ENCODE measurements at regions of chr7 and their contacts with region 1.

Region 1: DNA sequence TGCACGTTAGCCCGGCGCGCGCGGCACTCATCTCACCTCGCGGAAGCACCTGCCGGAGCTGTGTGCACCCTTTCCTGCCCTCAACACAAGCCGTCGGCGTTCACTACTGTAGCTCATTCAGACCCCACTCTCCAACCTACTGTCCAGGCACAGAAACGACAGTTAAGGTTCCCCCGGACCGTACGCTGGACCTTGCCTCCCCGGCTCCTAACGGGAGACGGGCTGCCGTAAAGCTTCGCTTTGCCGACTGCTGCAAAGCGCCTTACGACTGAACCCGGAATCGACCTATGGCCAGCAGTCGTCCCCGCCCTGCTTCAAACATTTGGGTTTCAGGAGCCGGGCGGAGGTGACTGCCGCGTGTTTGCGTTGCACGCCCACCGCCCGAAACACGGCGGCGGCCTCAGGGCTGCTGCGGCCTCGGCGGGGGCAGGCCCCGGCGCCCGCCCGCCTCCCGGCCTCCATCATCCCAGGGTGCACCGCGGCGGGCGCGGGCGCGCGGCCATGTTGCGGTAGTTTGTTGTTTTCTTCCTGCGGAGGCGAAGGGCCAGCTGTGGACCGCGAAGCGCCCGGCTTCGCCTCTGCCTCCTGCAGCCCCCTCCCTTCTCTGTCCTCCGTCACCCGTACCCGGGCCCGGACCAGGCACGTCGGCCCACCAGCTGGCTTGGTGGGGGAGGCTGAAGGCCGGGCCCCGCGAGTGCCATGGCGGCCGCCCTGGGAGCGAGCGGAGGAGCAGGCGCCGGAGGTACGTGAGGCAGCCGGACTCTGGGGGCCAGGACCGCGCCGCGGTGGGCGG is at the start of gene RBM33:
- DNase-seq: peak; percentile 53 to 87 (median 69)
- ATAC-seq: peak; percentile 81
- H3K4me3 ChIP-seq: peak within 1 kb of the TSS; percentile 79
- H3K4me3 Mint-ChIP-seq: peak within 1 kb of the TSS; percentile 99
- H3K27ac ChIP-seq: peak within 1 kb of the TSS; percentile 83 to 94
- H3K27ac Mint-ChIP-seq: peak within 1 kb of the TSS; percentile 94
- H3K4me1 ChIP-seq: peaks cover 22% of the 10 kb centered on the region
- H3K4me1 Mint-ChIP-seq: peaks cover 62% of the 10 kb centered on the region
- H3K27me3 ChIP-seq: no peaks in the 10 kb centered on the region
- H3K27me3 Mint-ChIP-seq: no peaks in the 10 kb centered on the region
- CTCF ChIP-seq: no peak
- total RNA-seq, gene RBM33: 178 to 184 TPM

Region 2: DNA sequence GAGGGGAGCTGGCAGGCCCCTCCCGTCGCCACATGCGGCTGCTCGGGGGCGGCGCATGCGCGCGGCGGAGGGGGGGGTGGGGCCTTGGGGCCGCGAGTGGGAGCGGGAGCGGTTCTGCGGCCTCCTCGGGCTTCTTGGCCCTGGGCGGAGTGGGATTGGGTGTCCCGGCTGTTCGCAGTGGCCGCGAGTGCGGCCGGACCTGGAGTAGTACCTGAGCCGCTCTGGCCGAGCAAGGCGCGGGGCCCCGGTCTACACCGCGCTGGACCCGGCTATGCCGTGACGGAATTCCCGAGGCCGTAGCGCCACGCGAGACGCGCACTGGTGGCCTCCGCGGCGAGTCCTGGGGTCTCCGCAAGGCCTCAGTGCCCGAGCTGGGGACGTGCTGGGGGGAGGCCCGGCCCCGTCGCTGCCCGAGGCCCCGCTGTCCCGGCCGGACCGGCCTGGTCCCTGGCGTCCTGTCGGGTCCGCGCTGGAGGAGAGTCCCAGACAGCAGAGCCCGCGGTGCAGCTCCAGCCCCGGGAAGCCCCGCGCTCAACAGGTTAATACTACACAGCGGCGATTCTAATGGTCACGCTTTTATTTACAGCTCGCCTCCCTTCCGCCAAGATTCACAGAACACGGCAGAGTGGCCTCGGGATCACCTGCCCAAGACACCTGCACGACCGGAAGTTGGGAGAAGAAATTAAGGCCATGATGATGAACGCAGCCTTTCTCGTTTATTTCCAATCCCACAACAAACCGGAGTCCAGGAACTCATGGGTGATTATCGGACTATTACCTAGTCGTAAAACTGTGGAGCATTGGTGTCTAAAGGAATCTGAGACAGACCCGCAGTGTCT is 640.8 kb before region 1 on chr7:
- CTCF ChIA-PET with region 1: no interaction called
- POLR2A ChIA-PET with region 1: interaction called, 3 read pairs
- intact Hi-C with region 1: loop called in 1 of 2 experiments (anchors 5 kb)
- DNase-seq: peak; percentile 71 to 92 (median 85)
- ATAC-seq: peak; percentile 86
- H3K4me3 ChIP-seq: peak overlapping the region; percentile 85
- H3K4me3 Mint-ChIP-seq: peak overlapping the region; percentile 97
- H3K27ac ChIP-seq: peak overlapping the region; percentile 40 to 52
- H3K27ac Mint-ChIP-seq: peak overlapping the region; percentile 88
- H3K4me1 ChIP-seq: peaks cover 16% of the 10 kb centered on the region
- H3K4me1 Mint-ChIP-seq: peaks cover 23% of the 10 kb centered on the region
- H3K27me3 ChIP-seq: no peaks in the 10 kb centered on the region
- H3K27me3 Mint-ChIP-seq: no peaks in the 10 kb centered on the region
- CTCF ChIP-seq: no peak

Region 3: GRCh38 chr7:155694851-155695250 is 50.5 kb after region 1 on chr7:
- CTCF ChIA-PET with region 1: no interaction called
- POLR2A ChIA-PET with region 1: no interaction called
- intact Hi-C with region 1: loop called in 1 of 2 experiments (anchors 10 kb)
- DNase-seq: no peak
- ATAC-seq: no peak
- H3K4me3 ChIP-seq: no peak overlapping the region
- H3K4me3 Mint-ChIP-seq: peak overlapping the region; percentile 13
- H3K27ac ChIP-seq: no peak overlapping the region
- H3K27ac Mint-ChIP-seq: no peak overlapping the region
- H3K4me1 ChIP-seq: peaks cover 10% of the 10 kb centered on the region
- H3K4me1 Mint-ChIP-seq: peaks cover 92% of the 10 kb centered on the region
- H3K27me3 ChIP-seq: no peaks in the 10 kb centered on the region
- H3K27me3 Mint-ChIP-seq: no peaks in the 10 kb centered on the region
- CTCF ChIP-seq: no peak

Region 4: DNA sequence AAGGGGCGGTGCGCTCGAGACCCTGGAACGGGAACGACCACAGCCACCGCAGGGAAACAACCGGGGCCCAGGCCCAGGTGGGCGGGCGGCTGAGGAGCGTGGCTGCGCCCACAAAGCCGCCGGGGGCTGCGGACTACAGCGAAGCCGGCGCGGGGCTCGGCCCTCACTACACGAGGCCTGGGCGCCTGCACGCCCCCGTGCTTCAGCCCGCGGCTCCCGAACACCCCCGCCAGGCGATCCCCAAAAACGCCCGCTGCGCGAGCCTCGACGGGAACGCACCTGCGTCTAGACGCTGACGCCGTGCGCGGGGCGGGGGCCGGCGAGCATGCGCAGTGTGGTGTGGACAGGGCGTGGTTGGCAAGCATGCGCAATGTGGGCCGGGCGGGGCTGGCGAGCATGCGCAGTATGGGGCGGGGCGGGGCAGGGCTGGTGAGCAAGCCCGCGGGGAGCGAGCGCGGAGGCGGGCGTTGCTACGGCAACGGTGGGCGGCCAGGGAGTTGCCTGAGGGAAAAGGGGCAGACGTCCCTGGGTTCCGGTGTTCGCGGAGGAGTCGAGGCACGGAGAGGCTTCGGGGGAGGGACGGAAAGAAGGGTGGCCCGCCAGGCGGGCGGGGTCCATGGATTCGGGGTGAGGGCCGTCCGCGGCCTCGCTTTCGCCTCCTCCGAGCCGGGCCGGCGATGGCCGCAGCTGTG is 996.0 kb after region 1 on chr7 and contains the start of gene RNF32:
- CTCF ChIA-PET with region 1: no interaction called
- POLR2A ChIA-PET with region 1: no interaction called
- intact Hi-C with region 1: loop called in 1 of 2 experiments (anchors 10 kb)
- DNase-seq: peak; percentile 87 to 98 (median 92)
- ATAC-seq: peak; percentile 74
- H3K4me3 ChIP-seq: peak within 1 kb of the TSS; percentile 64
- H3K4me3 Mint-ChIP-seq: peak within 1 kb of the TSS; percentile 89
- H3K27ac ChIP-seq: peak within 1 kb of the TSS; percentile 53 to 78
- H3K27ac Mint-ChIP-seq: peak within 1 kb of the TSS; percentile 85
- H3K4me1 ChIP-seq: peaks cover 17% of the 10 kb centered on the region
- H3K4me1 Mint-ChIP-seq: peaks cover 18% of the 10 kb centered on the region
- H3K27me3 ChIP-seq: no peaks in the 10 kb centered on the region
- H3K27me3 Mint-ChIP-seq: peaks cover 69% of the 10 kb centered on the region
- CTCF ChIP-seq: no peak
- total RNA-seq, gene RNF32: 0.99 TPM in 1 of 2 experiments, not detected in the other

Region 5: GRCh38 chr7:156949541-156950380 is 1305.4 kb after region 1 on chr7 and contains the start of gene NOM1:
- CTCF ChIA-PET with region 1: no interaction called
- POLR2A ChIA-PET with region 1: no interaction called
- intact Hi-C with region 1: loop called in 1 of 2 experiments (anchors 10 kb)
- DNase-seq: peak; percentile 85 to 96 (median 90)
- ATAC-seq: peak; percentile 94
- H3K4me3 ChIP-seq: peak within 1 kb of the TSS; percentile 89
- H3K4me3 Mint-ChIP-seq: peak within 1 kb of the TSS; percentile 97
- H3K27ac ChIP-seq: peak within 1 kb of the TSS in 1 of 2 donors; percentile 50
- H3K27ac Mint-ChIP-seq: peak within 1 kb of the TSS; percentile 82
- H3K4me1 ChIP-seq: peaks cover 30% of the 10 kb centered on the region
- H3K4me1 Mint-ChIP-seq: peaks cover 34% of the 10 kb centered on the region
- H3K27me3 ChIP-seq: peaks cover 0 to 4% of the 10 kb centered on the region in 2 experiments
- H3K27me3 Mint-ChIP-seq: peaks cover 8% of the 10 kb centered on the region
- CTCF ChIP-seq: peak; percentile 50
- total RNA-seq, gene NOM1: 25.5 to 27.6 TPM

Measured in CD4-positive, alpha-beta T cell (primary cell).